PC-9 (cell line): ENCODE measurements at regions of chr4 and their contacts with region 1.

Region 1: GRCh38 chr4:11635359-11636072 is 206.8 kb upstream of the HS3ST1 start:
- DNase-seq: peak; percentile 71 to 97
- H3K4me3 ChIP-seq: peak overlapping the region; percentile 31; the same call in 1 of the 2 replicates
- H3K27ac ChIP-seq: peak overlapping the region; percentile 99
- H3K4me1 ChIP-seq: peaks cover 51% of the 10 kb centered on the region
- H3K27me3 ChIP-seq: no peaks in the 10 kb centered on the region
- CTCF ChIP-seq: no peak

Region 2: GRCh38 chr4:11497212-11497806 is 138.2 kb before region 1 on chr4:
- CTCF ChIA-PET with region 1: no interaction called
- POLR2A ChIA-PET with region 1: interaction called, 3 read pairs
- intact Hi-C with region 1: loop called (anchors 1 kb)
- DNase-seq: no peak
- H3K4me3 ChIP-seq: no peak overlapping the region
- H3K27ac ChIP-seq: peak overlapping the region; percentile 87
- H3K4me1 ChIP-seq: peaks cover 7% of the 10 kb centered on the region; the same call in 1 of the 2 replicates
- H3K27me3 ChIP-seq: no peaks in the 10 kb centered on the region
- CTCF ChIP-seq: 0 out of 2 replicates have a peak, but pooled peaks have one; percentile 34

Region 3: DNA sequence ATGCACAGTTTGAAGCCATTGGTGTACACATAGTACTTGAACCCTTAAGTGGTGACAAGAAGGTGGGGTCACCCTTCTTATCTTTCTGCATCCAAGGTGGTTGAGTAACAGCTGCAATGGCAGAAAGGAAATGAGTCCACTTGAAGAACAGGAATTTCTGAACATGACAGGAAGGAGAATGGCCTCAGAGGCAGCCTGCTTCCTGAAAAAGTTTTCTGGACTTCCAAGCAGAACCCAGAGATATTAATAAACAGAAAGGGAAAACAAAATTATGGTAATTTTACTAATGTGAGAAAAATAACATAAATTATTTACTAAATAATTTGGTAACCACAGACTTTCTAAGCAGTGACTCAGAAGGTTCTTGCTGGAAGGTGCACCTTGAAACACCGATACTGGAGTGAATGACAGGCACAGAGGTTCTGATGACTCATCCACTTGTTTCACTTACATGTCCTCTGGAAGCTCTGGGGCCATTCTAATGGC is 86.9 kb before region 1 on chr4:
- CTCF ChIA-PET with region 1: no interaction called
- POLR2A ChIA-PET with region 1: no interaction called
- intact Hi-C with region 1: loop called (anchors 1 kb)
- DNase-seq: peak; percentile 29 to 77
- H3K4me3 ChIP-seq: 0 out of 2 replicates have a peak overlapping the region, but pooled peaks have one; percentile 10
- H3K27ac ChIP-seq: peak overlapping the region; percentile 93
- H3K4me1 ChIP-seq: peaks cover 29% of the 10 kb centered on the region
- H3K27me3 ChIP-seq: no peaks in the 10 kb centered on the region
- CTCF ChIP-seq: no peak

Region 4: DNA sequence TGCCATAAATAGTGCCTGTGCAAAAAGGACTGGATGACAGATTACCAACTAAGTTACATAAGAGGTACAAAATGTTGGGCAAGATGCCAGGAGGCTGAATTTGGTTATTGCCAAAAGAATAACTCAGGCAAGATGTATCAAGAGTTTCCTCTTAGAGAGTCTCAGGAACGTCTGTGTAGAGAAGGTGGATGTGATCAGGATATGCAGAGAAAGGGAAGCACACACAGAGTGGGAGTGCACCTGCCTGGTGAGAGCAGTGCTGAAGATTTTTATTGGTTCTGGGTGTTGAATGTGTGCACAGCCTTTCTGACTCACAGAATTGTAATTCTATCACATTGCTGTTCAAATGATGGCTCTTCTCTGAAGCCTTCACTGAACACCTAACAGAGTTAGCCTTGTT is 50.0 kb before region 1 on chr4:
- CTCF ChIA-PET with region 1: no interaction called
- POLR2A ChIA-PET with region 1: no interaction called
- intact Hi-C with region 1: loop called (anchors 10 kb)
- DNase-seq: peak; percentile 52 to 78
- H3K4me3 ChIP-seq: no peak overlapping the region
- H3K27ac ChIP-seq: peak overlapping the region; percentile 43
- H3K4me1 ChIP-seq: peaks cover 30% of the 10 kb centered on the region
- H3K27me3 ChIP-seq: no peaks in the 10 kb centered on the region
- CTCF ChIP-seq: no peak

Region 5: GRCh38 chr4:11614399-11614798 is 21.1 kb before region 1 on chr4:
- CTCF ChIA-PET with region 1: no interaction called
- POLR2A ChIA-PET with region 1: interaction called, 7 read pairs
- intact Hi-C with region 1: loop called (anchors 1 kb)
- DNase-seq: peak; percentile 80 to 96
- H3K4me3 ChIP-seq: peak overlapping the region; percentile 46
- H3K27ac ChIP-seq: peak overlapping the region; percentile 98
- H3K4me1 ChIP-seq: peaks cover 48% of the 10 kb centered on the region
- H3K27me3 ChIP-seq: no peaks in the 10 kb centered on the region
- CTCF ChIP-seq: no peak

Region 6: GRCh38 chr4:11623726-11624037 is 11.8 kb before region 1 on chr4:
- CTCF ChIA-PET with region 1: interaction called, 3 read pairs
- POLR2A ChIA-PET with region 1: interaction called, 12 read pairs
- intact Hi-C with region 1: no loop called
- DNase-seq: no peak
- H3K4me3 ChIP-seq: no peak overlapping the region
- H3K27ac ChIP-seq: peak overlapping the region; percentile 94; the same call in 1 of the 2 replicates
- H3K4me1 ChIP-seq: peaks cover 65% of the 10 kb centered on the region
- H3K27me3 ChIP-seq: no peaks in the 10 kb centered on the region
- CTCF ChIP-seq: peak; percentile 24; the same call in 1 of the 2 replicates

Region 7: GRCh38 chr4:11669156-11669555 is 33.6 kb after region 1 on chr4:
- CTCF ChIA-PET with region 1: no interaction called
- POLR2A ChIA-PET with region 1: no interaction called
- intact Hi-C with region 1: loop called (anchors 1 kb)
- DNase-seq: peak in 1 of 2 experiments; percentile 69
- H3K4me3 ChIP-seq: no peak overlapping the region
- H3K27ac ChIP-seq: peak overlapping the region; percentile 43
- H3K4me1 ChIP-seq: no peaks in the 10 kb centered on the region
- H3K27me3 ChIP-seq: no peaks in the 10 kb centered on the region
- CTCF ChIP-seq: no peak